Left colon (tissue), 2 donors: ENCODE measurements at regions of chr15 and their contacts with region 1.

Region 1: GRCh38 chr15:100633763-100634075 is 31.3 kb downstream of the ASB7 start:
- DNase-seq: no peak
- ATAC-seq: no peak

Region 2: GRCh38 chr15:100987143-100987542 is 353.4 kb after region 1 on chr15:
- intact Hi-C with region 1: no loop called
- DNase-seq: no peak
- ATAC-seq: peak; percentile 77

Region 3: DNA sequence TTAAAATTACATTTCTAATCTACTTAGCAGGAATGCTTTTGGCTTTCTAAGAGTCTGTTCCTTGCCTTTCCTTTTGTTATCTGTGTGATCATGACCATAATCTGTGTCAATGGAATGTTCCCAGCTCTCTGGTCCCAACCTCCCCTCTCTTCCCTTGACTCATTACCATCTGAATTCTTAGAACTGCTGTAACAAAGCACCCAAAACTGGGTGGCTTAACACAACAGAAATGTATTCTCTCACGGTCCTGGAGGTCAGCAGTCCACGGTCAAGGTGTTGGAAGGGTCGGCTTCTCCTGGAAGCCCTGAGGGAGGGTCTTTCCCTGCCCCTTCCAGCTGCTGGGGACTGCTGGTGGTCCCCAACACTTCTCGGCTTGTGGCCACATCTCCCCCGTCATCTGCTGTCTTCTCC is 366.6 kb after region 1 on chr15:
- intact Hi-C with region 1: loop called in 1 of 2 experiments (anchors 5 kb)
- DNase-seq: no peak
- ATAC-seq: no peak

Region 4: DNA sequence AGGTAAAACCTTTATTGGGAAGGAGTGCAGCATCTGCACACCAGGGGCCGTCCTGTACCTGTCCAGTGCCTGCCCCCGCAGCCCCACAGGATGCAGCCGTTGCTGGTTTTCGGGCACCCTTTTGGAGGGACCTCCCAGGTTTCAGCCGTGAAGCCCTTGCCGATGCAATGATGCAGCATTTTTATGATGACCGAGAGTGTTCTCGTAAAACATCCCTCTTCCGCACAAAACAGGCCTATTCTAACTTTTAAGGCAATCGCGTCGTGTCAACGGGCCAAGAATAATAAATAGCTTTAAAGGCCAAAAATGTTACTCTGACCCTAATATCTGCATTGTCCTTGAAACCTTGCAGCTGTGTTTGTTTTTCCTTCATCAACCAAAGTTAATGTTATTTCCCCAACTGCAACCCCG is 411.5 kb after region 1 on chr15:
- intact Hi-C with region 1: no loop called
- DNase-seq: peak in 1 of 2 donors; percentile 18
- ATAC-seq: no peak